ENCODE measurements at regions of chr6 and their contacts with region 1.

Region 1: GRCh38 chr6:128713461-128713860 is 169.5 kb upstream of the LAMA2 start:
- DNase-seq: no peak
- H3K4me3 ChIP-seq: no peak overlapping the region
- H3K27ac ChIP-seq: no peak overlapping the region
- H3K4me1 ChIP-seq: no peaks in the 10 kb centered on the region
- H3K27me3 ChIP-seq: peaks cover 0 to 6% of the 10 kb centered on the region in 2 experiments
- CTCF ChIP-seq: no peak
- POLR2A ChIP-seq: no peak

Region 2: DNA sequence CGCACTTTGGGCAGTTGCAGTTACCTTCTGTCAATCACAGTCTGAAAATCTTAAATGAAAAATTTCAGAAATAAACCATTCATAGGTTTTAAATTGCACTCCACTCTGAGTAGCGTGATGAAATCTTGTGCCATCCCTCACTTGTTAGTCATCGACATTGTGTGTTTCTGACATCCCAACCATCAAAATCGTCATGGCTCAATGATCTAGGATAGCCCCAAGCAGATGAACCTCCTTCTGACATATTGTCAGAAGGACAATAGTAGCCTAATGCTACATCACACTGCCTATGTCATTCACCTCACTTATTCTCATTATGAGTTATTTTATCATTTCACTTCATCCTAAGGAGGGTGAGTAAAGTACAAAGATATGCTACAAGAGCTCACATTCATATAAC is 477.9 kb before region 1 on chr6:
- CTCF ChIA-PET with region 1: no interaction called
- POLR2A ChIA-PET with region 1: no interaction called
- dilution Hi-C with region 1: no loop called
- intact Hi-C with region 1: no loop called
- DNase-seq: no peak
- H3K4me3 ChIP-seq: no peak overlapping the region
- H3K27ac ChIP-seq: no peak overlapping the region
- H3K4me1 ChIP-seq: peaks cover 10% of the 10 kb centered on the region
- H3K27me3 ChIP-seq: no peaks in the 10 kb centered on the region
- CTCF ChIP-seq: no peak
- POLR2A ChIP-seq: no peak

Region 3: GRCh38 chr6:128569737-128570679 is 143.5 kb before region 1 on chr6:
- CTCF ChIA-PET with region 1: no interaction called
- POLR2A ChIA-PET with region 1: no interaction called
- dilution Hi-C with region 1: no loop called
- intact Hi-C with region 1: no loop called
- DNase-seq: peak; percentile 9
- H3K4me3 ChIP-seq: no peak overlapping the region
- H3K27ac ChIP-seq: no peak overlapping the region
- H3K4me1 ChIP-seq: peaks cover 5% of the 10 kb centered on the region
- H3K27me3 ChIP-seq: no peaks in the 10 kb centered on the region
- CTCF ChIP-seq: no peak
- POLR2A ChIP-seq: no peak

Region 4: DNA sequence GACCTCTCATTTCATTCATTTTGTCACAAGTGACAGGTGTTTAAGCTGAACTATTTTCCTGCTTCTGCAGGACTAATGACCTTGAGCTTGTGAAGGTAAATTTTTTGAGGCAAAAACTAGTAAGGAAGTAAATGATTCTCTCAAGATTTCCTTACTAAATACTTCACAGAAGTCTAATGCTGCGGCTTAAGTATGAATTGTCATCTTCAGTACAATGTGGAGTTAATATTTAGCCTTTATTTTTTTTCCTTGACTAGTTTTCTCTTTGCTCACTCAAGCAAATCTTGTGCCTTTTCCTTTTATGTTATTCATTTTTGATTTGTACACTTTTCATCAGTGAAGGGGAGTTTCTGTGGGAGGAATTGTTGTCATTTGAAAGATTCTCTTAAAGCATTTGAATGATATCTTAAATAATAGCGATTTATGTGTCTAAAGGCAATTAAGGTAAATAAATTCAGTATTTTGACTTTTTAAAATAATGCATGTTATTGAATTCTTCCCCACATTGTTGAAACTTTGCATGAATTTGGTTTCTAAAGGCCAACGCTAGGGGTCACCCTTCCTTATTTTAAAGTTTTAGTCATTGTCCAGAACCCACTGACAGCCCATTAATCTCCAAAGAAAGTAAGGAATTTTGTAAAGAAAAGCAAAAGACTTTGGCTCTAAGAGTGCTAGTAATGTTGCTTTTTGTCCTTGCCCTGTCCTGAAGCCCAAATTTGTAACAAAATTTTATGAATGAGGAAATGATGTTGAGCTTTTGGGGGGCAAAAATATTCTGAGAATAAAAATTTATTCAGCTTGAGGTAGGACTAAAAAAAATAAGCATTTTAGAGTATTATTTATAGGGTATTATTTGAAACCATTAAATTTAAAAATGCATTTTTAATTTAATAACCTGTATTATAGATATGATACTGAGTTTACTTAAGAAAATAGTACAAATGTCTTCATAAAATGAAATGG is 12.1 kb after region 1 on chr6:
- CTCF ChIA-PET with region 1: interaction called, 19 read pairs
- POLR2A ChIA-PET with region 1: no interaction called
- dilution Hi-C with region 1: no loop called
- intact Hi-C with region 1: no loop called
- DNase-seq: peak; percentile 44
- H3K4me3 ChIP-seq: no peak overlapping the region
- H3K27ac ChIP-seq: no peak overlapping the region
- H3K4me1 ChIP-seq: no peaks in the 10 kb centered on the region
- H3K27me3 ChIP-seq: peaks cover 0 to 5% of the 10 kb centered on the region in 2 experiments
- CTCF ChIP-seq: peak; percentile 50 to 55
- POLR2A ChIP-seq: no peak

Measured in endothelial cell of umbilical vein (primary cell).